Endothelial cell of umbilical vein (primary cell): ENCODE measurements at regions of chr20 and their contacts with region 1.

Region 1: DNA sequence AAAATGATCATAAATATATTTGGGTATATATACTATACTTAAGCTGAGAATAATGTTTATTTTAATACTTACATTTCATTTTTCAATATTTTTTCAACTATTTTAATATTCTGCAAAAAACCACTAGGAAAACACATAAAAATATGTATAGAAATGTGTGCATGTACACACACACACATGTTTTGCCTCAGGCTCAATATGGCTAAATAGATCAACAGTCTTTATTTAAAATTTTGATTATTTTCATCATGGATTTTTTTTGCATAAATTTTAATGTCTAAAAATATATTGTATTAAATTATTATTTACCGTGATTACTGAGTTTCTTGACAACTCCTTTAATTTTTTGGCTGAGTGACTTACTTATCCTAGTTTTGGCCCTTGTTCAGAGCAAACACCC is 846.5 kb downstream of the DHX35 start:
- DNase-seq: no peak
- H3K4me3 ChIP-seq: no peak overlapping the region
- H3K27ac ChIP-seq: no peak overlapping the region
- H3K4me1 ChIP-seq: no peaks in the 10 kb centered on the region
- H3K27me3 ChIP-seq: peaks cover 0 to 2% of the 10 kb centered on the region in 2 experiments
- CTCF ChIP-seq: no peak
- POLR2A ChIP-seq: no peak

Region 2: DNA sequence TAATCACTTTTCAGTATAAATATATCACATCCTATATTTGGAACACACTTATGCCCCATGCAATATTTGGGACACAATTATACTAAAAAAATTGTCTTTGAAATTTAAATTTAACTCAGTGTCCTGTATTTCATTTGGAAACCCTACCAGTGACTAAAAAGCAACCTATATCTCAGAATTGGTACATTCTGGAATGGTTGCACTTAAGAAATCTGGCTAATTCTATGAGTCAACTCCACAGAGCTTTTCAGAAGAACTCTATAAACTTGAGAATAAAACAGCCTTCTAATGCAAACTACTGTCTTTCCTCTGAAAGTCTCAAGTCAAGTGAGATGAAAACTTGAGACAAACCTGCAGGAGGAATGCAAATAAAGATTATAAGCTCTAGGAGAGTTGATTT is 560.3 kb after region 1 on chr20:
- CTCF ChIA-PET with region 1: no interaction called
- POLR2A ChIA-PET with region 1: no interaction called
- dilution Hi-C with region 1: no loop called
- intact Hi-C with region 1: loop called (anchors 5 kb)
- DNase-seq: no peak
- H3K4me3 ChIP-seq: no peak overlapping the region
- H3K27ac ChIP-seq: no peak overlapping the region
- H3K4me1 ChIP-seq: no peaks in the 10 kb centered on the region
- H3K27me3 ChIP-seq: peaks cover 0 to 7% of the 10 kb centered on the region in 2 experiments
- CTCF ChIP-seq: no peak
- POLR2A ChIP-seq: no peak